ENCODE measurements at regions of chr12 and their contacts with region 1.

Region 1: DNA sequence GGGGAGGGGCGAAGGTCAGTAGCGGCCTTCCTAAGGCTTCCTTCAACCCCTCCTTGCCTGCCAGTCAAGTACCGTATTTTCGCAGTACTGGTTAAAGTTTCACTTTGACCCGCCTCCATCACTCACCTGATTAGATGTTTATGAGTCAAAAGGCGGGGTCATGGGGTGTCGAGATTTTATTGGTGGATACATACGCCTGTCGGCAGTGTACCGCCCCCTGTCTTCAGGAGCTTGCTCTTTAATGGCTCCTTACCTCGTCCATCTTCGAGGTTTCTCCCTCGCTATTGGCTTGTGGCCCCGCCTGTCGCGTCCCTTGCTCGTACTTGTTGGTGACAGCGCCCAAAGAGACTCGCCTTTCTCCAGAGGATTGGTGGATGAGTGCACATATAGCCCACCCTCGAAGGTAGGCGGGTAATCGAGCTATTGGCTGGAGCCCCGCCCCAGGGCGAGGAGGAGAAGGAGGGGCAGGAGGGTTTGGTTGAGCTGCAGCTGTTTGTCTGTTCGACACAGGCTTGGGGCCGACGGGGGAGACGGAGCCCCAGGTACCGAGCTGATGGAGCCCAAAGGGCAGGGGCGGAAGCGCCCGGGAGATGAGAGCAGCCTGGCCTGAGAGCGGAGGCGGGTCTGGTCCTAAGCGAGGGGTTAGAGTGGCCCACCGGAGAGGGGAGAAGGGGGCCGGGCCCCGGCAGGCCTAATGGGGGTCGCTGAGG is at the start of gene RAB5B:
- DNase-seq: peak; percentile 100
- H3K4me3 ChIP-seq: peak within 1 kb of the TSS; percentile 87 to 93 (median 92)
- H3K27ac ChIP-seq: peak within 1 kb of the TSS; percentile 81
- H3K4me1 ChIP-seq: peaks cover 27% of the 10 kb centered on the region
- H3K27me3 ChIP-seq: no peaks in the 10 kb centered on the region
- CTCF ChIP-seq: no peak
- POLR2A ChIP-seq: peak; percentile 74
- total RNA-seq, gene RAB5B: 97.4 and 103 TPM in 2 replicates

Region 2: GRCh38 chr12:55829967-55830600 is 143.7 kb before region 1 on chr12:
- CTCF ChIA-PET with region 1: interaction called, 5 read pairs
- POLR2A ChIA-PET with region 1: interaction called, 7 read pairs
- dilution Hi-C with region 1: no loop called
- intact Hi-C with region 1: loop called (anchors 1 kb)
- DNase-seq: peak; percentile 70
- H3K4me3 ChIP-seq: peak overlapping the region; percentile 81 to 92 (median 82)
- H3K27ac ChIP-seq: peak overlapping the region; percentile 60
- H3K4me1 ChIP-seq: peaks cover 27% of the 10 kb centered on the region
- H3K27me3 ChIP-seq: no peaks in the 10 kb centered on the region
- CTCF ChIP-seq: no peak
- POLR2A ChIP-seq: no peak

Region 3: GRCh38 chr12:55931780-55932550 is 41.8 kb before region 1 on chr12:
- CTCF ChIA-PET with region 1: interaction called, 6 read pairs
- POLR2A ChIA-PET with region 1: interaction called, 3 read pairs
- dilution Hi-C with region 1: no loop called
- intact Hi-C with region 1: loop called (anchors 2 kb)
- DNase-seq: peak; percentile 50
- H3K4me3 ChIP-seq: peak overlapping the region; percentile 53 to 93 (median 70)
- H3K27ac ChIP-seq: peak overlapping the region; percentile 42
- H3K4me1 ChIP-seq: peaks cover 33% of the 10 kb centered on the region
- H3K27me3 ChIP-seq: no peaks in the 10 kb centered on the region
- CTCF ChIP-seq: no peak
- POLR2A ChIP-seq: peak; percentile 64

Region 4: DNA sequence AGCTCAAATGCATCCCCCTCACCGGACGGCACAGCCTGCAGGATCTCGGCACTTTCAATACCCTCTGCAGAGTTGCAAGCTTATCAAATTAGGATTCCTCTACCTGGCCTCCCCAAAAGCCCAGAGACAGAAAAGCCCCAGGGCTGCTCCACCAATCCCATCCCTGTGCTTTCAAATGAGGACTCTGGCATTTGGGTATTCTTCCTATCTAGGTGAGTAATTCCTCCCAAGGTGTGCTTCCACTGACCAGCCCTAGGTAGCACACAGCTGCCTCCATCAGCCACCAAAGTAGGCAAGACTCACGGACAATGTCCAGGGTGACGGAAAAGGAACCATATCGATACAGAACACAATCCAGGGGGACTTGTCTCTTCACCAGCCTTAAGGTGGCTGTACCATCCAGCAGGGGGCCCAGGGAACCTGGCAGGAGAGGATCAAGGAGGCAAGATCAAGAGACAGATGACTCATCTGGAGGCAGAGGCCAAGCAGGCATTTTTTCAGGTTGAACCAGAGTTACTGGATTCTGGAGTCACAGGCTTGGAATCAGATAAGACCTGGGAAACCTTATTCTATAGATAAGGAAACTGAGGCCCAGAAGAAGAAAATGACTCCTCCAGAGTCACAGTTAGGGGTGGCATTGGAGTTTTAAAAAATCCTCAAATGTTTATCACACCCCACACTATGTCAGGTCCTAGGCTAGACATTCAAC is 17.8 kb before region 1 on chr12:
- CTCF ChIA-PET with region 1: interaction called, 11 read pairs
- POLR2A ChIA-PET with region 1: interaction called, 3 read pairs
- dilution Hi-C with region 1: no loop called
- intact Hi-C with region 1: no loop called
- DNase-seq: peak; percentile 40
- H3K4me3 ChIP-seq: no peak overlapping the region
- H3K27ac ChIP-seq: no peak overlapping the region
- H3K4me1 ChIP-seq: no peaks in the 10 kb centered on the region
- H3K27me3 ChIP-seq: no peaks in the 10 kb centered on the region
- CTCF ChIP-seq: peak; percentile 34 to 37
- POLR2A ChIP-seq: no peak

Region 5: DNA sequence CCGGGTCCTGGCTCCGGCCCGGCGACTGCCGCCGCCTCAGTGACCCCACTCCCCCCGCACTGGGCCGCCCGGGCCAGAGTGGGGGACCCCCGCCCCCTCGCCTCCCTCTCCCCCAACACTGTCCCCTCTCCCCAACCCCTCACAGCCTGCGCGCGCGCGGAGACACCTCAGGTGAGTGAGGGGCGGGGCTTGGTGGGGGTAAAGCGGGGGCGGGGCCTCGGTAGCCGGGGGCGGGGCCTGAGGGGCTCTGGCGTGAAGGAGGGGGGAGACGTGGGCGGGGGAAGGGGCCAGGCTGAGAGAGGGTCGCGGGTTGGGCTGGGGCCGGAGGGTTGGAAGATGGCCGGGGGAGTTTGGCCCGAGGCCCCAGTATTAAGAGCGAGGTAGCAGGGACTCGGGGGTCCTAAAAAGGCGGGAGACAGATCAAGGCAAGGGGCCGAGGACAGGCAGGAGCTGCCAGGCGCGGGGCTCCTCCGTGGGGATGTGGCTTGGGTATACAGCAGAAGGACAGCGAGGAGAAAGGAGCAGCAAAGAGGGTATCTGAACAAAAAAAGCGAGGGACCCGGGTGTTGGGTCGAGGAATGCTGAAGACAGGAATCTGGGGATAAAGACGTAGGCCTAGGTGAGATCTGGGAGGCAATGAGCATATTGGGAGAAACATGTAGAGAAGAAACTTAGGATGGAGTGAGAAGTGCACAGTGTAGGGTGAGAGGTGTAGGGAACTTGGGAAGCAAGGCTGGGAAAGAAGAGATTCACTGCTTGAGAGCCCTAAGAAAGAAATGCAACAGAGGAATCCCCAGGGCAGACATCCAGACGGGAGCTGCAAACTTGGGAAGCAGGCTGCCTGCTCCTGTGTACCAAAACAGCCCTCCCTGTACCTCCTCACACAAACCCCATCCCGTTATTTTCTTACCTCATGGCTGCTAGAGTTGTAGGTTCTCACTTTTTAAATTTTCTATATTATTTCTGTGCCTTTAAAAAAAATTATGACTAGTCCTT is 34.1 kb after region 1 on chr12:
- CTCF ChIA-PET with region 1: no interaction called
- POLR2A ChIA-PET with region 1: interaction called, 18 read pairs
- dilution Hi-C with region 1: no loop called
- intact Hi-C with region 1: no loop called
- DNase-seq: peak; percentile 37
- H3K4me3 ChIP-seq: peak overlapping the region; percentile 53 to 74 (median 53)
- H3K27ac ChIP-seq: no peak overlapping the region
- H3K4me1 ChIP-seq: peaks cover 5% of the 10 kb centered on the region
- H3K27me3 ChIP-seq: no peaks in the 10 kb centered on the region
- CTCF ChIP-seq: no peak
- POLR2A ChIP-seq: no peak

Measured in endothelial cell of umbilical vein (primary cell).